ENCODE measurements at regions of chr6 and their contacts with region 1.

Region 1: GRCh38 chr6:137717074-137718073 is 149.7 kb upstream of the TNFAIP3 start:
- DNase-seq: no peak
- H3K4me3 ChIP-seq: no peak overlapping the region
- H3K27ac ChIP-seq: no peak overlapping the region
- H3K4me1 ChIP-seq: no peaks in the 10 kb centered on the region
- H3K27me3 ChIP-seq: no peaks in the 10 kb centered on the region
- CTCF ChIP-seq: no peak
- POLR2A ChIP-seq: no peak

Region 2: DNA sequence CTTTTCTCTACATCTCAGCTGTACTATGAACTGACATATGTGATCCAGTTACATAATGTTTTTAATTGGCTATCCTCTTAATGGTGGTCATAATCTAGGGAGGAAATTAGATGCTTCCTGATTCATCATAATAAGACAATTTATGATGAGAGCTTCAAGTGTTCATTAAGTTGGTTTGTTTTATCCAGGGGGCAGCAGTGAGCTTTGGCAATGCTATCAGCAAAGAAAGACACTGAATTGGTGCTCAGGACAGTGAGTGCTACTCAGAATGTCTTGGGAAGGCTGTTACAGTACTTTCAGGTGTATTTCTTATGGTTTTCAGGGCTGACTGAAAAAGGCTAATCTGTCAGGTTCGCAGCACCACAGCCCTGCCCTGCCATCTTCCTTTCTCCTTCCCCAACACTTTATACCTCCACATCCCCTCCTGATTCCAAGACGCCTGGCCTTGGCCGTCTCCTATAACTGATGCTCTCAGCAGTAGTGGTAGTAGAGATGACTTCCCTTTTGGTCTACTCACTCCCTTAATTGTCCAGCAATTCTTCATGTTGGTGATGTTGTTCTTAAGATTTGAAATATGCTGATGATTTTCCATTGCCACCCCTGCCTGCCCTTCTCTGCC is 82.7 kb after region 1 on chr6:
- intact Hi-C with region 1: loop called in 1 of 2 experiments (anchors 10 kb)
- DNase-seq: peak; percentile 49 to 79 (median 69)
- H3K4me3 ChIP-seq: no peak overlapping the region
- H3K27ac ChIP-seq: no peak overlapping the region
- H3K4me1 ChIP-seq: peaks cover 0 to 14% of the 10 kb centered on the region in 2 donors
- H3K27me3 ChIP-seq: no peaks in the 10 kb centered on the region
- CTCF ChIP-seq: peak; percentile 52 to 70 (median 68)
- POLR2A ChIP-seq: no peak

Region 3: GRCh38 chr6:138017166-138017757 is 299.9 kb after region 1 on chr6:
- intact Hi-C with region 1: no loop called
- DNase-seq: no peak
- H3K4me3 ChIP-seq: no peak overlapping the region
- H3K27ac ChIP-seq: no peak overlapping the region
- H3K4me1 ChIP-seq: no peaks in the 10 kb centered on the region
- H3K27me3 ChIP-seq: no peaks in the 10 kb centered on the region
- CTCF ChIP-seq: no peak
- POLR2A ChIP-seq: no peak

Measured in adrenal gland (tissue), 19 donors.